ENCODE measurements at regions of chr10 and their contacts with region 1.

Region 1: GRCh38 chr10:13787015-13787421 is 200.3 kb downstream of the PRPF18 start:
- DNase-seq: peak; percentile 76
- CTCF ChIP-seq: no peak

Region 2: GRCh38 chr10:13724484-13724883 is 62.5 kb before region 1 on chr10:
- CTCF ChIA-PET with region 1: no interaction called
- POLR2A ChIA-PET with region 1: no interaction called
- DNase-seq: no peak
- CTCF ChIP-seq: no peak

Region 3: DNA sequence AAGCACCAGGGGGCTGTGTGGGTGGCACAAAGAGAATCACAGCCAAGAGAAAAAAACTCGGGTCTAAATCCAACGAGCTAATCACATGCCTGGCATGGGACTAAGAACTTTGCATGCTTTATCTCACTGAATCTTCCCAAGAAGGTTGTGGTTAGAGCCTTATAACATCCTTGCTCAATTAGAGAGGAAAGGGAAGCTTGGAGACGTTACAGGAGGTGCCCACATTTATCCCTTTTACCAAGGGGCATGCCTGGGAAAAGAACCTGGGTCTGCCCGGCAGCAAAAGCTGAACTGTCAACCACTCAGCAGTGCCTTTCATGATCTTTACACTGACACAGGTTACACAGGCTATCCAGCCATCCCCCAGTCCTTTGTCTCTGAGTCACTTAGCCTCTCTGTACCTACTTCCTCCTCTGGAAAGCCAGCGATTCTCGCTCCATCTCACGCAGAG is 10.1 kb before region 1 on chr10:
- CTCF ChIA-PET with region 1: interaction called, 10 read pairs
- POLR2A ChIA-PET with region 1: no interaction called
- DNase-seq: peak; percentile 53
- CTCF ChIP-seq: no peak

Region 4: GRCh38 chr10:13862546-13863233 is 75.7 kb after region 1 on chr10:
- CTCF ChIA-PET with region 1: no interaction called
- POLR2A ChIA-PET with region 1: no interaction called
- DNase-seq: no peak
- CTCF ChIP-seq: no peak

Region 5: GRCh38 chr10:14329746-14330173 is 542.7 kb after region 1 on chr10:
- CTCF ChIA-PET with region 1: no interaction called
- POLR2A ChIA-PET with region 1: no interaction called
- DNase-seq: no peak
- CTCF ChIP-seq: no peak

Measured in GM10248 (cell line).